ENCODE measurements at regions of chr9 and their contacts with region 1.

Region 1: GRCh38 chr9:87812375-87813118 is 70.1 kb upstream of the SPATA31E1 start:
- DNase-seq: peak; percentile 62
- H3K4me3 Mint-ChIP-seq: no peak overlapping the region
- H3K27ac Mint-ChIP-seq: peak overlapping the region; percentile 54
- H3K4me1 Mint-ChIP-seq: peaks cover 24% of the 10 kb centered on the region
- H3K27me3 Mint-ChIP-seq: peaks cover 7% of the 10 kb centered on the region

Region 2: DNA sequence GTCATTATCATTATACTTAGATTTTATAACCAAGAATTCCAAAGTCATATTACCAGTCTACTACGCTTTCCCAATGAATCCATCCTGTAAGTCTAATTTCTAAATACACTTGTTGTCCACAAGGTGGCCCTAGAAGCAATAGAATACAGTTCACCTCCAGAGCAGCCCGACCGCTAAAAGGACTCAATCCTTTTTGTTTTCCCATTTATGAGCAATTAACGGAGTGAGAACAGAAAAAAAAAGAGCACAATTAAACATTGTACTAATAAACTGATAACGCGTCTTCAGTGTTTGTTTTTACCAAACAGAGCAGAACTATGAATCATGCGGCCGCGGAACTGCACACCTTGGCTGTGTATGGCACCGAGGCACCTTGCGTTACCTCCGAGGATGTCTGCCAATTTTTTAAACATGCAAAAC is 475.6 kb before region 1 on chr9:
- intact Hi-C with region 1: loop called (anchors 2 kb)
- DNase-seq: peak; percentile 58
- H3K4me3 Mint-ChIP-seq: peak overlapping the region; percentile 73
- H3K27ac Mint-ChIP-seq: no peak overlapping the region
- H3K4me1 Mint-ChIP-seq: peaks cover 4% of the 10 kb centered on the region
- H3K27me3 Mint-ChIP-seq: peaks cover 30% of the 10 kb centered on the region

Region 3: DNA sequence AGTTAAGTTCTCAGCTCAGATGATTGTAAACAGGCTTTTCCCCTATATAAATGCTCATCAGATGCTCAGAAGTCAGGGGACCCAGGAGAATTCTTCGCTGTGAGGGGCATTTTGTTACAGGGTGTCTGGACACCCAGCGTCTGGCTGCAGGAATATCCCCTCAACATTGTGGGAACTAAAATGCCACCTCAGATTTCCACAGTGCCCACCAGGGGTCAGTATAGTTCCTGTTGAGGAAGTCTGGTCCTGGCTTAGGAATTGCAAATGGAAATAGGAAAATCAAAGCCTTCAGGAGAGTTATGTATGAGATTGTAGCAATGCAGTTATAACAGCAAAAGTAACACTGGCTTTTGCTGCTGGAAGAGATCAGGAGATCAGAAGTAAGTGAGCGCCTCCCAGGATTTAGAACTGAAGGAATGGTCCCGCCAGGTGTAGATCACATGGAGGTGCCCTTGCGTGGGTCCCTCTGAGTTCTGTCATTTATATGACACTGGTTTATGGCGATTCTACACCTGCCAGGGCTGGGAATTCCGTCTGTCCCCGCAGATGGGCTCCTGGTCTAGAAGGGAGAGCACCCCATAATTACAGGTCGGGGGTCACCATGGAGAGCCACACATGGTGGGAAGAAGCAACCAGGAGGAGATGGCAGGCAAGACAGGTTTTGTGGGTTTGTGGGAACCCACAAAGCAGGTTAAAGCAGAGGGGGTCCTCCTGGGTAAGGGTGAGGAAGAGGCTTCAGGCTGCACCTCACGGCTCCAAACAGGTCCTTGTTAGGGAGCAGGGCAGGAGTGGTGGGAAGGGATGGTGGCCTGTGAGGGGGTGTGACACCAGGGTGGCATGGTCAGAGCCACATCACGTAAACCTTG is 133.7 kb before region 1 on chr9:
- intact Hi-C with region 1: loop called (anchors 1 kb)
- DNase-seq: peak; percentile 72
- H3K4me3 Mint-ChIP-seq: no peak overlapping the region
- H3K27ac Mint-ChIP-seq: no peak overlapping the region
- H3K4me1 Mint-ChIP-seq: peaks cover 3% of the 10 kb centered on the region
- H3K27me3 Mint-ChIP-seq: peaks cover 2% of the 10 kb centered on the region

Region 4: DNA sequence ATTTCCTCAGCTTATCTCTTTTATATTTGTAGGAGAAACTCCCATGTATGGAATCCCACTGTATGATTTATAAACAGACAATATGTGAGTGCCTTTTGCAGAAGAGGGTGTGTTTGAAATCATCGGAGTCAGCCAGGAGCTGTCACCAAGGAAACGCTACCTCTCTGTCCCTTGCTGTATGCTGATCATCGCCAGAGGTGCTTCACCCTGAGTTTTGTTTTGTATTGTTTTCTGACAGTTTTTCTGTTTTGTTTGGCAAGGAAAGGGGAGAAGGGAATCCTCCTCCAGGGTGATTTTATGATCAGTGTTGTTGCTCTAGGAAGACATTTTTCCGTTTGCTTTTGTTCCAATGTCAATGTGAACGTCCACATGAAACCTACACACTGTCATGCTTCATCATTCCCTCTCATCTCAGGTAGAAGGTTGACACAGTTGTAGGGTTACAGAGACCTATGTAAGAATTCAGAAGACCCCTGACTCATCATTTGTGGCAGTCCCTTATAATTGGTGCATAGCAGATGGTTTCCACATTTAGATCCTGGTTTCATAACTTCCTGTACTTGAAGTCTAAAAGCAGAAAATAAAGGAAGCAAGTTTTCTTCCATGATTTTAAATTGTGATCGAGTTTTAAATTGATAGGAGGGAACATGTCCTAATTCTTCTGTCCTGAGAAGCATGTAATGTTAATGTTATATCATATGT is 104.6 kb before region 1 on chr9:
- intact Hi-C with region 1: loop called (anchors 1 kb)
- DNase-seq: no peak
- H3K4me3 Mint-ChIP-seq: peak overlapping the region; percentile 6
- H3K27ac Mint-ChIP-seq: no peak overlapping the region
- H3K4me1 Mint-ChIP-seq: peaks cover 30% of the 10 kb centered on the region
- H3K27me3 Mint-ChIP-seq: peaks cover 34% of the 10 kb centered on the region

Region 5: GRCh38 chr9:87713278-87713987 is 99.1 kb before region 1 on chr9:
- intact Hi-C with region 1: loop called (anchors 1 kb)
- DNase-seq: peak; percentile 71
- H3K4me3 Mint-ChIP-seq: peak overlapping the region; percentile 33
- H3K27ac Mint-ChIP-seq: peak overlapping the region; percentile 7
- H3K4me1 Mint-ChIP-seq: peaks cover 34% of the 10 kb centered on the region
- H3K27me3 Mint-ChIP-seq: peaks cover 16% of the 10 kb centered on the region

Region 6: GRCh38 chr9:87763286-87763685 is 49.3 kb before region 1 on chr9:
- intact Hi-C with region 1: no loop called
- DNase-seq: no peak
- H3K4me3 Mint-ChIP-seq: no peak overlapping the region
- H3K27ac Mint-ChIP-seq: no peak overlapping the region
- H3K4me1 Mint-ChIP-seq: no peaks in the 10 kb centered on the region
- H3K27me3 Mint-ChIP-seq: peaks cover 2% of the 10 kb centered on the region

Region 7: GRCh38 chr9:87792831-87793288 is 19.7 kb before region 1 on chr9:
- intact Hi-C with region 1: loop called (anchors 2 kb)
- DNase-seq: peak; percentile 76
- H3K4me3 Mint-ChIP-seq: no peak overlapping the region
- H3K27ac Mint-ChIP-seq: peak overlapping the region; percentile 45
- H3K4me1 Mint-ChIP-seq: peaks cover 35% of the 10 kb centered on the region
- H3K27me3 Mint-ChIP-seq: no peaks in the 10 kb centered on the region